BJ (cell line): ENCODE measurements at regions of chr15 and their contacts with region 1.

Region 1: GRCh38 chr15:59315914-59316451 is 56.7 kb downstream of the MYO1E start:
- DNase-seq: peak; percentile 65
- H3K4me3 ChIP-seq: no peak overlapping the region
- H3K27me3 ChIP-seq: no peaks in the 10 kb centered on the region
- CTCF ChIP-seq: no peak

Region 2: GRCh38 chr15:59299929-59300617 is 15.9 kb before region 1 on chr15:
- CTCF ChIA-PET with region 1: interaction called, 3 read pairs
- POLR2A ChIA-PET with region 1: interaction called, 10 read pairs
- DNase-seq: peak; percentile 93
- H3K4me3 ChIP-seq: no peak overlapping the region
- H3K27me3 ChIP-seq: no peaks in the 10 kb centered on the region
- CTCF ChIP-seq: no peak